ENCODE measurements at regions of chr18 and their contacts with region 1.

Region 1: DNA sequence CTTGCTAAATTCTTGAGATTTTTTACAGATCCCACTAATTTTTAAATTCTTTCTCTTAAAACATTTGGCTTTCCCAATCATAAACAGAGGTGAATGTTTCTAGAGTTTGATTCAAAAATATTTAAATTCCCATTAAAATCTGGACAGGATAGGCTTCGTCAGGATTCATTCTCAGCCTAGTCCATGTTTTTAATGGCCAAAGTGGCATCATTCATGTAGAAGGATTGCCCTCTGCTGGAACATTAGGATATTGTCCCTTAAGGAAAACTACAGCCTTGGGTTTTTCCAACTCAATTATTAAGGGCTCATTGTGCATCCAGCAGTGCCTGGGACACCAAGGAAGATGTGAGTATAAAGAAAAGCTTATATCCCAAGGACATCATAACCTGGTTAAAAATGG is 71.7 kb downstream of the TPGS2 start:
- DNase-seq: peak in 12 of 42 donors; percentile 4 to 76 (median 34)

Region 2: DNA sequence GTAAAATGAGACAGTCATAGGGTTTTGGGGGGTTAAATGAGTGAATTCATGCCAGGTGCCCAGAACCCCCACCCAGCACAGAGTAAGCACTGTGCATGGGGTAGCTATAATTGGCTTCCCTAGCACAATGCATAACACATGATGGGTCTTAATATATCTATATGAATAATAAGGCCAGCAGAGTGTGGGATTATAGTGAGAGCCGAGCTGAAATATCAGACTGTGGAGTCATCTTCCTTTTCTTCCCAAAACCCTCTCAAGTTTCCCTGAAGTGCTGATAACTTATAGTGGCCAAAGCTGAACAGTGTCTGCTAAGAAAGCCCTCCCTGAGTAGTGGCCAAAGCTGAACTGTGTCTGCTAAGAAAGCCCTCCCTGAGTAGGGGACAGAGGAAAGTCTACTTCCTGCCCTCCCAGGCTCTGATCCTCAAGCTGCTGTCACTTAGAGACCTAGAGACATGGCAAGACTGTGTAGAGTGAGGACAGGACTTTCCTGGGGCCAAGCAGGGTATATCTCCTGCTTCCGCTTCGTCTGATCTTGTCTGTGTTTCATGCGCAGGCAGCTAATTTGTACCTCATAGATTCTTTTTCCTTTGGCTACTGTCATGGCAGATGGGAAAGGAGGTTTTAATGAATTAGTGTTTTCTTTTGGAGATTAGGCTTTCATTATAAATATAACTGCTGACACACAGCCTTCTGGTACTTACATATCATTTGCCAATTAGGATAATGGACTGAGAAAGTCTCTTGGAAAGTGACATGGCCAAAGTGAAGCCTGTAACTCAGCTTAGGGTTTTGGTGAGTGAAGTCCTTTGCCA is 364.7 kb before region 1 on chr18:
- intact Hi-C with region 1: no loop called
- DNase-seq: no peak

Region 3: GRCh38 chr18:36441426-36442240 is 315.4 kb before region 1 on chr18:
- intact Hi-C with region 1: no loop called
- DNase-seq: no peak

Region 4: GRCh38 chr18:36693931-36694620 is 63.0 kb before region 1 on chr18:
- intact Hi-C with region 1: loop called (anchors 5 kb)
- DNase-seq: no peak